PC-9 (cell line): ENCODE measurements at regions of chr5 and their contacts with region 1.

Region 1: GRCh38 chr5:146238973-146239372 is 35.6 kb downstream of the RBM27 start:
- DNase-seq: no peak
- H3K4me3 ChIP-seq: no peak overlapping the region
- H3K27ac ChIP-seq: no peak overlapping the region
- H3K4me1 ChIP-seq: no peaks in the 10 kb centered on the region
- H3K27me3 ChIP-seq: no peaks in the 10 kb centered on the region
- CTCF ChIP-seq: no peak

Region 2: GRCh38 chr5:145752947-145753346 is 486.0 kb before region 1 on chr5:
- CTCF ChIA-PET with region 1: no interaction called
- POLR2A ChIA-PET with region 1: interaction called, 11 read pairs
- intact Hi-C with region 1: no loop called
- DNase-seq: no peak
- H3K4me3 ChIP-seq: no peak overlapping the region
- H3K27ac ChIP-seq: no peak overlapping the region
- H3K4me1 ChIP-seq: no peaks in the 10 kb centered on the region
- H3K27me3 ChIP-seq: no peaks in the 10 kb centered on the region
- CTCF ChIP-seq: no peak

Region 3: GRCh38 chr5:146158257-146158656 is 80.7 kb before region 1 on chr5:
- CTCF ChIA-PET with region 1: no interaction called
- POLR2A ChIA-PET with region 1: no interaction called
- intact Hi-C with region 1: loop called (anchors 5 kb)
- DNase-seq: no peak
- H3K4me3 ChIP-seq: no peak overlapping the region
- H3K27ac ChIP-seq: no peak overlapping the region
- H3K4me1 ChIP-seq: no peaks in the 10 kb centered on the region
- H3K27me3 ChIP-seq: no peaks in the 10 kb centered on the region
- CTCF ChIP-seq: no peak

Region 4: GRCh38 chr5:146560205-146560812 is 321.3 kb after region 1 on chr5:
- CTCF ChIA-PET with region 1: no interaction called
- POLR2A ChIA-PET with region 1: no interaction called
- intact Hi-C with region 1: no loop called
- DNase-seq: no peak
- H3K4me3 ChIP-seq: no peak overlapping the region
- H3K27ac ChIP-seq: no peak overlapping the region
- H3K4me1 ChIP-seq: no peaks in the 10 kb centered on the region
- H3K27me3 ChIP-seq: 0 out of 2 replicates have a peak, but pooled peaks cover 10% of the 10 kb centered on the region
- CTCF ChIP-seq: no peak